H1 (cell line): ENCODE measurements at regions of chr19 and their contacts with region 1.

Region 1: GRCh38 chr19:13597640-13598039 is 91.4 kb upstream of the CACNA1A start:
- DNase-seq: peak in 1 of 2 experiments; percentile 56
- H3K4me3 ChIP-seq: no peak overlapping the region
- H3K27ac ChIP-seq: no peak overlapping the region
- H3K4me1 ChIP-seq: no peaks in the 10 kb centered on the region; a peak in 1 of 7 replicates
- H3K27me3 ChIP-seq: no peaks in the 10 kb centered on the region
- CTCF ChIP-seq: peak; percentile 55 to 80 (median 74)
- EP300 ChIP-seq: no peak
- POLR2A ChIP-seq: no peak
- RAD21 ChIP-seq: peak; percentile 90 to 95

Region 2: DNA sequence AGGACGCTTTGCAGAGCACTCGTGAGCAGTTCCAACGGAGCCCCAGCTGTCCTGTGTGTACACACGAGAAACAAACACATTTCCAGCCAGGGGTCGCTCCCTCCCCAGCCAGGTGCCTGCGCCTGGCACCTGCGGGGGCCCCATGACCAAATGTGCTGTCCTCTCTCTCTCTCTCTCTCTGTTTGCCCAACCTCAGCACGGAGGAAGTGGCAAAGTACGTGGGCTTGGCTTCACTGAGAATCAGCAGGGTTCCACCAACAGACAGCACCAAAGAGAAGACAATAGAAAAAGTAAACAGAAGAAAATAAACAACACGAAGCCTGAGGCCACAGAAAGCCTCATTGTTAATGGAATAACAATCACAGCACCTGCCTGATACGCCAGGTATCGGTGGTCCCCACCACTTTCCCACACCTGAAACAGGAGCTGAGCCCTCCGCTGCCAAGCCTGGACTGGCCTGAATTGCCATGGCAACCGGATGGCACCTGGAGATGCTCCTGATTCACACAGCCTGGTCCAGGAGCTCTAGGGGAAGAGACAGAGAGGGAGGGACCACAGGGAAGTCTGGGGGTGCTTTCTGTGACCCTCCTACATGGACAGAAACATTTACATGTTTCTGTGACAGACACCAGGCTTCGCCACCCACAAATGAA is 12.5 kb after region 1 on chr19:
- CTCF ChIA-PET with region 1: interaction called, 10 read pairs
- POLR2A ChIA-PET with region 1: no interaction called
- DNase-seq: no peak
- H3K4me3 ChIP-seq: no peak overlapping the region
- H3K27ac ChIP-seq: no peak overlapping the region
- H3K4me1 ChIP-seq: peaks cover 0 to 7% (median 5%) of the 10 kb centered on the region in 4 experiments; a peak in 5 of 7 replicates
- H3K27me3 ChIP-seq: no peaks in the 10 kb centered on the region
- CTCF ChIP-seq: peak in 2 of 3 experiments; percentile 18 to 35; a peak in 3 of 4 replicates
- EP300 ChIP-seq: no peak
- POLR2A ChIP-seq: no peak
- RAD21 ChIP-seq: peak; percentile 53 to 63

Region 3: GRCh38 chr19:13652810-13653590 is 55.4 kb after region 1 on chr19:
- CTCF ChIA-PET with region 1: no interaction called
- POLR2A ChIA-PET with region 1: no interaction called
- DNase-seq: no peak
- H3K4me3 ChIP-seq: peak overlapping the region in 1 of 4 experiments; percentile 31; a peak in 1 of 8 replicates
- H3K27ac ChIP-seq: peak overlapping the region; percentile 2; the same call in 1 of the 2 replicates
- H3K4me1 ChIP-seq: peaks cover 0 to 5% (median 0%) of the 10 kb centered on the region in 4 experiments; a peak in 4 of 7 replicates
- H3K27me3 ChIP-seq: no peaks in the 10 kb centered on the region
- CTCF ChIP-seq: no peak
- EP300 ChIP-seq: no peak
- POLR2A ChIP-seq: no peak
- RAD21 ChIP-seq: no peak

Region 4: GRCh38 chr19:13748169-13748828 is 150.7 kb after region 1 on chr19:
- CTCF ChIA-PET with region 1: no interaction called
- POLR2A ChIA-PET with region 1: no interaction called
- DNase-seq: peak in 1 of 2 experiments; percentile 47
- H3K4me3 ChIP-seq: peak overlapping the region; percentile 80 to 97 (median 88)
- H3K27ac ChIP-seq: peak overlapping the region; percentile 44
- H3K4me1 ChIP-seq: no peaks in the 10 kb centered on the region; a peak in 2 of 7 replicates
- H3K27me3 ChIP-seq: no peaks in the 10 kb centered on the region
- CTCF ChIP-seq: no peak
- EP300 ChIP-seq: no peak
- POLR2A ChIP-seq: no peak
- RAD21 ChIP-seq: no peak